ENCODE measurements at regions of chr16 and their contacts with region 1.

Region 1: DNA sequence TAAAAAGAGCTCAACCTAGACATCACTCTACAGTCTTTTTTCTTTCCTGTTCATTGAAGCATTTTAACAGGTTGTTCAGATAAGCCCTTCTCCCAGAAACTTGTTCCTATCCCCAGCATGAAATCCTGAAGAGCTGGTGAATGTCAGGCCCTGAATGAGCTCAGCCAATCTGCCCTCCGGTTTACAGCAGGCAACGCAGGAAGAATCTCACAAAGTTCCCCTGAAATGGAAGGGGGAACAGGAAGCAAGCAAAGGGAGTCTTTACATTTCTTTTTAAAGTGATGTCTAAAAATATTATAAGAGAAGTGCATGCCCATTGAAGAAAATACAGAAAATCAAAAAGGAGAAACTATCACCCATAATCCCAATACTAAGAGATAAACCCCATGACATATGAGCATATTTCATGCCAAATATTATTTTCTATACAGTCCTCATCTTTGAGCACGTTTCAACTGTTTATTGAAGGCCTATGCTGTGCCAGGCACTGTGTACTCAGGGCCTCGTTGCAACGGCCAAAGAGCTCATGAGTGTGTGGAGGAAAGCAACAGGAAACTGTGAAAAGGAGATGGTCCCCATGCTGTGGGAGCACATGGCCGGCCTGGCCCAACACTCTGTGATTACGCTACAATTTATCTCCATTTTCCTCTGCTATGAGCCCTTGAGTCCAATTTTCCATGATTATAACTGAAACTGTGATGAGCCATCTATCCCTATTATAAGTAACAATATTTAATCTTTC is 5.7 kb downstream of the TK2 start:
- DNase-seq: no peak
- ATAC-seq: no peak
- H3K4me3 ChIP-seq: no peak overlapping the region
- H3K27ac ChIP-seq: peak overlapping the region in 2 of 10 donors; percentile 12 to 69
- H3K4me1 ChIP-seq: peaks cover 0 to 43% (median 24%) of the 10 kb centered on the region in 9 donors
- H3K27me3 ChIP-seq: no peaks in the 10 kb centered on the region
- CTCF ChIP-seq: no peak

Region 2: DNA sequence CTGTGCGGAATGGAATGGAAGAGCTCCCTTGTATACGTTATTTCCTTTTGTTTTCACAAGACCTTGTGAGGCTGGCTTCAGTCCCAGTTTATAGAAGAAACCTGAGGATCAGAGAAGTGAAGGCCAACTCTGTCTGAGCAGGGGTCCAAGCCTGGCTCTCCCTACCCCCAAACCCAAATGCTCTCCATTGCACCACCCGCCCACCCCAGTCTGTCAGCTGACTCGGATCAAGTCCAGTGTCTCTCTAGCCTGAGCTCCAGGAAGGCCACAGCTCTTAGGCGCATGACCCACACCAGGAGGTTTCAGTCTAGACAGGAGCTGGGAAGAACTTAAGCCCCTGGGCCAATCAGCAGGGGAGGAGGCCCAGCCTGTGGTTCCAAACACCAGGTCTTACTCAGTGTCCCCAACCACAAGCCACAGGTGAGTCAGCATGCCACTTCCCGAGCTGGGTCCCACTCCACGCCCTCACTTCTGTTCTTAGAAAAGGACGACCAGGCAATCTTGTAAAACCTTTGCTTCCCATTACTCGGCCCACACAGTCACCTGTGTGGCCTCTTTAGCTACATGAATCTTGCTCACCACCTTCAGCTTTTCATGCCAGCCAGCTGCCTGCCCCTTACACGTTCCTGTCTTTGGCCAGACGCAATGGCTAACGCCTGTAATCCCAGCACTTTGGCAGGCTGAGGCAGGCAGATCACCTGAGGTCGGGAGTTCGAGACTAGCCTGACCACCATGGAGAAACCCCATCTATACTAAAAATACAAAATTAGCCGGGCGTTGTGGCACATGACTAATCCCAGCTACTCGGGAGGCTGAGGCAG is 22.0 kb before region 1 on chr16:
- intact Hi-C with region 1: loop called in 3 of 10 experiments (anchors 1 to 2 kb)
- DNase-seq: no peak
- ATAC-seq: peak in 1 of 8 donors; percentile 6
- H3K4me3 ChIP-seq: no peak overlapping the region
- H3K27ac ChIP-seq: peak overlapping the region in 6 of 10 donors; percentile 41 to 100 (median 98)
- H3K4me1 ChIP-seq: peaks cover 15 to 99% (median 74%) of the 10 kb centered on the region in 9 donors
- H3K27me3 ChIP-seq: no peaks in the 10 kb centered on the region
- CTCF ChIP-seq: no peak